ENCODE measurements at regions of chr14 and their contacts with region 1.

Region 1: GRCh38 chr14:88824314-88825077 is at the start of gene TTC8:
- H3K4me3 Mint-ChIP-seq: peak within 1 kb of the TSS; percentile 90
- H3K27ac Mint-ChIP-seq: peak within 1 kb of the TSS; percentile 99
- H3K4me1 Mint-ChIP-seq: peaks cover 20% of the 10 kb centered on the region
- H3K27me3 Mint-ChIP-seq: peaks cover 3% of the 10 kb centered on the region

Region 2: DNA sequence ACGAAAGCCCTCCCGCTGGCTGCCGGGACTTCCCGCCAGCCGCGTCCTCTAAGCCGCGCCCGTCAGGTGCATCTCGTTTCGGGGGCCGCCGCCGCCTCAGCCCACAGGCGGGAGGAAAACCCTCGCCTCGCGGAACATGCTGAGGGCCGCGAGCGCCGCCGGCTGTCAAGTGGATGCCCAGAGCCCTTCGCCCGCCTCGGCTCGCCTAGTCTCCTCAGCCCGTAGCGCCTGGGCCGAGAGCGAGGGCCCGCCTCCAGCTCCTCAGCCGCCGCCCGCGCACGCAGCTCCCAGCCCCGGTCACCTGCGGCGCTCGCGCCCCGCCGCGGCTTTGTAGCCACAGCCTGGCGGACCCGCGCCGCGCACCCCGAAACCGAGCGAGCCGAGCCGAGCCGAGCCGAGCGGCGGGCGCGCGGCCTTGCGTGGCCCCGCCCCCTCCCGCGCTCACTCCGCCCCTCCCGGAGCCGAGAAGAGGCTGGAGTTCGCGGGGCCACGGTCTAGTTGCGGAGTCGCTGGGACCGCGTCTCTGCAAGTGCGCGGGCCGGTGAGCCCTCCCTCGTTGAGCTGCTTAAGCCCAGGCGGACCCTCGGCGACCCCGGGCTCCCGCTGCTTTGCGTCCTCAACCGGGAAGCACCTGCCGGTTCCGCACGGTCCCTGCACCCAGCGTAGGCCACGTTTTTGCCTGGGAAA is 31.8 kb before region 1 on chr14 and contains the start of gene EML5:
- intact Hi-C with region 1: loop called (anchors 5 kb)
- H3K4me3 Mint-ChIP-seq: peak within 1 kb of the TSS; percentile 78
- H3K27ac Mint-ChIP-seq: no peak within 1 kb of the TSS
- H3K4me1 Mint-ChIP-seq: peaks cover 6% of the 10 kb centered on the region
- H3K27me3 Mint-ChIP-seq: peaks cover 47% of the 10 kb centered on the region